CD4-positive, alpha-beta T cell (primary cell): ENCODE measurements at regions of chr11 and their contacts with region 1.

Region 1: GRCh38 chr11:925496-926321 is at the start of gene AP2A2:
- DNase-seq: peak; percentile 78 to 99 (median 90)
- ATAC-seq: peak; percentile 71
- H3K4me3 ChIP-seq: peak within 1 kb of the TSS; percentile 65
- H3K4me3 Mint-ChIP-seq: peak within 1 kb of the TSS; percentile 90
- H3K27ac ChIP-seq: peak within 1 kb of the TSS; percentile 62 to 73
- H3K27ac Mint-ChIP-seq: peak within 1 kb of the TSS; percentile 96
- H3K4me1 ChIP-seq: peaks cover 43% of the 10 kb centered on the region
- H3K4me1 Mint-ChIP-seq: peaks cover 33% of the 10 kb centered on the region
- H3K27me3 ChIP-seq: no peaks in the 10 kb centered on the region
- H3K27me3 Mint-ChIP-seq: no peaks in the 10 kb centered on the region
- CTCF ChIP-seq: peak; percentile 61
- total RNA-seq, gene AP2A2: 45.9 to 46.6 TPM

Region 2: GRCh38 chr11:615504-616319 is 310.0 kb before region 1 on chr11 and contains the start of gene IRF7:
- CTCF ChIA-PET with region 1: no interaction called
- POLR2A ChIA-PET with region 1: no interaction called
- intact Hi-C with region 1: loop called in 1 of 2 experiments (anchors 5 kb)
- DNase-seq: peak; percentile 67 to 93 (median 86)
- ATAC-seq: peak; percentile 65
- H3K4me3 ChIP-seq: peak within 1 kb of the TSS; percentile 97
- H3K4me3 Mint-ChIP-seq: peak within 1 kb of the TSS; percentile 96
- H3K27ac ChIP-seq: peak within 1 kb of the TSS; percentile 83 to 95
- H3K27ac Mint-ChIP-seq: peak within 1 kb of the TSS; percentile 89
- H3K4me1 ChIP-seq: peaks cover 34% of the 10 kb centered on the region
- H3K4me1 Mint-ChIP-seq: peaks cover 16% of the 10 kb centered on the region
- H3K27me3 ChIP-seq: no peaks in the 10 kb centered on the region
- H3K27me3 Mint-ChIP-seq: no peaks in the 10 kb centered on the region
- CTCF ChIP-seq: no peak
- total RNA-seq, gene IRF7: 36.5 to 37.7 TPM

Region 3: DNA sequence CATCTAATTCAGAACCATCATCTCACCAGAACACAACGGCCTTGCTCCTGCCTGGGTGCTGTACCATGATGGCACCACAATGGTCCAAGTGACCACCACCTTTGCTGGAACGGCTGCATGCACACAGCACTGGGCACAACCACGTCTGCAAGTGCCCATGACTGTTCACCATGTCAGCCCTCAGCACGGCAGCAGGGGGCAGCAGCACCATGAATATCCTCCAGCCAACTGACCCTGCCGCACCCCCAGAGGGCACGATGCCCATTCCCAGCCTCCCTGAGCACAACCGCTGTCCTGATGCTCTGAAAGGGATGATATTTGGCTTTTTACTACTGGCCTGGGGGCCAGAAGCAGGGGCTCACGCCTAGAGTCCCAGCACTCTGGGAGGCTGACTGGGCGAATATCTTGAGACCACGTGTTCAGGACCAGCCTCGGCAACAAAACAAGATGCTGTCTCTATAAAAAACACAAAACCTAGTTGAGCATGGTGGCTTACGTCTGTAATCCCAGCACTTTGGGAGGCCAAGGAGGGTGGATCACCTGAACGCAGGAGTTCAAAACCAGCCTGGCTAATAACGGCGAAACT is 262.9 kb before region 1 on chr11:
- CTCF ChIA-PET with region 1: no interaction called
- POLR2A ChIA-PET with region 1: no interaction called
- intact Hi-C with region 1: no loop called
- DNase-seq: peak in 11 of 14 experiments; percentile 17 to 68 (median 32)
- ATAC-seq: peak; percentile 66
- H3K4me3 ChIP-seq: no peak overlapping the region
- H3K4me3 Mint-ChIP-seq: no peak overlapping the region
- H3K27ac ChIP-seq: no peak overlapping the region
- H3K27ac Mint-ChIP-seq: no peak overlapping the region
- H3K4me1 ChIP-seq: no peaks in the 10 kb centered on the region
- H3K4me1 Mint-ChIP-seq: no peaks in the 10 kb centered on the region
- H3K27me3 ChIP-seq: no peaks in the 10 kb centered on the region
- H3K27me3 Mint-ChIP-seq: no peaks in the 10 kb centered on the region
- CTCF ChIP-seq: peak; percentile 76

Region 4: GRCh38 chr11:848380-848931 is 77.3 kb before region 1 on chr11:
- CTCF ChIA-PET with region 1: no interaction called
- POLR2A ChIA-PET with region 1: no interaction called
- intact Hi-C with region 1: loop called (anchors 2 to 10 kb)
- DNase-seq: peak; percentile 49 to 79 (median 59)
- ATAC-seq: peak; percentile 85
- H3K4me3 ChIP-seq: no peak overlapping the region
- H3K4me3 Mint-ChIP-seq: peak overlapping the region; percentile 56
- H3K27ac ChIP-seq: no peak overlapping the region
- H3K27ac Mint-ChIP-seq: no peak overlapping the region
- H3K4me1 ChIP-seq: peaks cover 30% of the 10 kb centered on the region
- H3K4me1 Mint-ChIP-seq: peaks cover 4% of the 10 kb centered on the region
- H3K27me3 ChIP-seq: peaks cover 7 to 18% of the 10 kb centered on the region in 2 experiments
- H3K27me3 Mint-ChIP-seq: peaks cover 4% of the 10 kb centered on the region
- CTCF ChIP-seq: peak; percentile 86

Region 5: GRCh38 chr11:910589-911195 is 15.0 kb before region 1 on chr11 and contains the start of gene CHID1:
- CTCF ChIA-PET with region 1: interaction called, 5 read pairs
- POLR2A ChIA-PET with region 1: interaction called, 10 read pairs
- intact Hi-C with region 1: loop called in 1 of 2 experiments (anchors 1 kb)
- DNase-seq: peak; percentile 62 to 89 (median 80)
- ATAC-seq: peak; percentile 93
- H3K4me3 ChIP-seq: peak within 1 kb of the TSS; percentile 76
- H3K4me3 Mint-ChIP-seq: peak within 1 kb of the TSS; percentile 95
- H3K27ac ChIP-seq: no peak within 1 kb of the TSS
- H3K27ac Mint-ChIP-seq: peak within 1 kb of the TSS; percentile 62
- H3K4me1 ChIP-seq: peaks cover 21% of the 10 kb centered on the region
- H3K4me1 Mint-ChIP-seq: peaks cover 14% of the 10 kb centered on the region
- H3K27me3 ChIP-seq: no peaks in the 10 kb centered on the region
- H3K27me3 Mint-ChIP-seq: no peaks in the 10 kb centered on the region
- CTCF ChIP-seq: no peak
- total RNA-seq, gene CHID1: 17.1 to 22.8 TPM